Gastrocnemius medialis (tissue), 4 donors: ENCODE measurements at regions of chr17 and their contacts with region 1.

Region 1: GRCh38 chr17:41665566-41666236 is 23.0 kb upstream of the EIF1 start:
- DNase-seq: peak; percentile 62 to 79
- ATAC-seq: peak; percentile 72 to 79
- H3K4me3 ChIP-seq: peak overlapping the region; percentile 61 to 86 (median 67)
- H3K27ac ChIP-seq: peak overlapping the region; percentile 77 to 86 (median 82)
- H3K4me1 ChIP-seq: peaks cover 0 to 21% of the 10 kb centered on the region in 2 donors
- H3K27me3 ChIP-seq: no peaks in the 10 kb centered on the region
- CTCF ChIP-seq: peak; percentile 86 to 96 (median 92)
- POLR2A ChIP-seq: peak; percentile 35 to 43

Region 2: DNA sequence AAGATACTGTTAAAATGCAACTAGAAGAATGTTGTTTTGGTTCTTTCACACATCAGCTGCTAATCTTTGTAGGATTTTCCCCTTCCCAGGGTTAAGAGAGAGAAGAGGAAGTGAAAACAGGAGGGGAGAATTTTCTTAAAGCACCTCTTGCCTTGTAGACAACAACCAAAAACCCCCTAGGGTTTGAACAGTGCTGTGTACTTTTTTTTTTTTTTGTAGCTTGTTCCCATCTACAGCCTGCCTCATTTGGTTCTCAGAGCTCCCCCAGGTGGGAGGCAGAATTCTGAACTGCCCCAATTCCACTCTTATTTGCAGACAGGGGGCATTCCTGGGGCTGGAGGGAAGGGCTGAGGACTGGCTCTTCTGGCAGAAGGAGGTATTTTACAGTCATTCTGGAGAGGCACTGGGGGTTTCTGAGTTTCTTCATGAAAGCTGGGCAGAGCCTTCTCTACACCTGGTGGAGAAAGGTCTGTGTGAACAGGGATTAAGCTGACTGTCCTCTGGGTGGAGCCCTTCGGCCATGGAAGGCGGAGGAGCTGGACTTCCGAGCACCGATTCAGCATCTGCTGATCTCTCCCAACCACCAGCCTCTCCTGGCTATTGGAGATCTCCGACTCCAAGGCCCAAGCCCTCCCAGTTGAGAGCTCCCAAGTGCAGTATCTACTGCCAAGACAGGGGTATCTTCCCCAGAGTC is 1050.3 kb before region 1 on chr17:
- in situ Hi-C with region 1: loop called in 1 of 4 experiments (anchors 25 kb)
- intact Hi-C with region 1: no loop called
- DNase-seq: no peak
- ATAC-seq: no peak
- H3K4me3 ChIP-seq: no peak overlapping the region
- H3K27ac ChIP-seq: no peak overlapping the region
- H3K4me1 ChIP-seq: peaks cover 0 to 7% of the 10 kb centered on the region in 2 donors
- H3K27me3 ChIP-seq: peaks cover 29 to 36% (median 33%) of the 10 kb centered on the region in 3 donors
- CTCF ChIP-seq: peak in 2 of 5 experiments; percentile 25 to 34
- POLR2A ChIP-seq: no peak

Region 3: GRCh38 chr17:40818733-40819527 is 846.8 kb before region 1 on chr17:
- in situ Hi-C with region 1: loop called in 2 of 4 experiments (anchors 10 to 25 kb)
- intact Hi-C with region 1: loop called (anchors 5 kb)
- DNase-seq: peak; percentile 59 to 71
- ATAC-seq: peak; percentile 91 to 95
- H3K4me3 ChIP-seq: peak overlapping the region; percentile 58 to 73 (median 69)
- H3K27ac ChIP-seq: peak overlapping the region; percentile 79 to 87 (median 83)
- H3K4me1 ChIP-seq: peaks cover 14 to 22% of the 10 kb centered on the region in 2 donors
- H3K27me3 ChIP-seq: no peaks in the 10 kb centered on the region
- CTCF ChIP-seq: no peak
- POLR2A ChIP-seq: peak; percentile 47 to 68

Region 4: GRCh38 chr17:41548844-41549595 is 116.7 kb before region 1 on chr17:
- in situ Hi-C with region 1: loop called (anchors 5 to 10 kb)
- intact Hi-C with region 1: loop called (anchors 2 kb)
- DNase-seq: peak; percentile 37 to 56
- ATAC-seq: peak; percentile 86 to 90
- H3K4me3 ChIP-seq: peak overlapping the region in 3 of 4 donors; percentile 4 to 36 (median 17)
- H3K27ac ChIP-seq: no peak overlapping the region
- H3K4me1 ChIP-seq: peaks cover 8 to 13% of the 10 kb centered on the region in 2 donors
- H3K27me3 ChIP-seq: peaks cover 0 to 3% (median 0%) of the 10 kb centered on the region in 3 donors
- CTCF ChIP-seq: peak; percentile 64 to 88 (median 80)
- POLR2A ChIP-seq: no peak

Region 5: GRCh38 chr17:41688699-41689496 is 23.2 kb after region 1 on chr17 and contains the start of gene EIF1:
- in situ Hi-C with region 1: no loop called
- intact Hi-C with region 1: loop called (anchors 2 kb)
- DNase-seq: peak; percentile 100
- ATAC-seq: peak; percentile 85 to 87
- H3K4me3 ChIP-seq: peak within 1 kb of the TSS; percentile 94 to 100 (median 96)
- H3K27ac ChIP-seq: peak within 1 kb of the TSS; percentile 99 to 100 (median 100)
- H3K4me1 ChIP-seq: peaks cover 28 to 30% of the 10 kb centered on the region in 2 donors
- H3K27me3 ChIP-seq: no peaks in the 10 kb centered on the region
- CTCF ChIP-seq: no peak
- POLR2A ChIP-seq: peak; percentile 100
- total RNA-seq, gene EIF1: 222 to 842 (median 375) TPM